ENCODE measurements at regions of chr17 and their contacts with region 1.

Region 1: DNA sequence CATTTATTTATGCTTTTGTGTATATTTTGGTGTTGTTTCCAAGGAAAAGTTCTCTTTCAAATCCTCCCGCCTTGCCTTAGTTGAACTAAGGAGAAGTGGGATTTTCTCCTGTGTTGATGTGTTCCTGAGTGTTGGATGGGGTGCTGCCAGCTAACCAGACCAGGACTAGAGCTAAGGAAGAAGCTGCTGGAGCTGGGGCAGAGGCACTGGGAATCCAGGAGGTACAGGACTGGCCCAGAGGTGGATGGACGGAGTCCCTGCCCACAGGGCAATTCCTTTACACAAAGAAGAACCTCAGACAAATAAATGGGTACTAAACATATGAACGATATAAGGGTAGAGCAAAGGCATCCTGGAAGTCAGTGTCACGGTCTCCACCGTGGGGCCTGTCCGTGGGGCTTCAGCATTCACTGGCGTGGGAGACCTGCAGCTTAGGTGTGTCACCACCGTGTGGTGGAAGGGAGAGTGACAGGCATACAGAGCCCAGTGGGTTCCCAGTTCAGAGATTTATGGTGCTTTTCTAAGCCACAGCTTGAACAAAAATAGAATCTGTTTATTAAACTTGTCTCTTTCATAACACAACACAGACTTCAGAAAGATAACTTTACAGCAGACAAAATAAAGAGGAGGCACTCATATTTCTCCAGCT is 270.7 kb downstream of the NTN1 start:
- DNase-seq: peak; percentile 67
- H3K4me3 ChIP-seq: no peak overlapping the region; a peak in 1 of 4 replicates
- H3K27ac ChIP-seq: no peak overlapping the region
- H3K4me1 ChIP-seq: no peaks in the 10 kb centered on the region
- H3K27me3 ChIP-seq: no peaks in the 10 kb centered on the region
- CTCF ChIP-seq: peak; percentile 53
- EP300 ChIP-seq: no peak
- RAD21 ChIP-seq: peak; percentile 68

Region 2: GRCh38 chr17:9273428-9274391 is 18.3 kb before region 1 on chr17:
- CTCF ChIA-PET with region 1: interaction called, 13 read pairs
- POLR2A ChIA-PET with region 1: no interaction called
- DNase-seq: no peak
- H3K4me3 ChIP-seq: no peak overlapping the region
- H3K27ac ChIP-seq: no peak overlapping the region
- H3K4me1 ChIP-seq: no peaks in the 10 kb centered on the region; a peak in 1 of 4 replicates
- H3K27me3 ChIP-seq: no peaks in the 10 kb centered on the region
- CTCF ChIP-seq: no peak
- EP300 ChIP-seq: no peak
- RAD21 ChIP-seq: no peak

Region 3: DNA sequence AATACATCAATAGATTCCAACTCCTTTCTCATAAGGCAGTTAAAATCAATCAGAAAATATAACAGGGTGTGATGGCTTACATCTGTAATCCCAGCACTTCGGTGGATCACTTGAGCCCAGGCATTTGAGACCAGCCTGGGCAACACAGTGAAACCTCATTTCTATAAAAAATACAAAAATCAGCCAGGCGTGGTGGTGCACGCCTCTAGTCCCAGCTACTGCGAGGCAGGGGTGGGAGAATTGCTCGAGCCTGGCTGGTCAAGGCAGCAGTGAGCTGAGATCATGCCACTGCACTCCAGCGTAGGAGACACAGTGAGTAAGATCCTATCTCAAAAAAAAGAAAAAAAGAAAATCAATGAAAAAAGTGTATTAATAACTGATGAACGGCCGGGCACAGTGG is 12.1 kb before region 1 on chr17:
- CTCF ChIA-PET with region 1: interaction called, 13 read pairs
- POLR2A ChIA-PET with region 1: no interaction called
- DNase-seq: no peak
- H3K4me3 ChIP-seq: no peak overlapping the region
- H3K27ac ChIP-seq: no peak overlapping the region
- H3K4me1 ChIP-seq: peaks cover 0 to 2% of the 10 kb centered on the region in 2 experiments; a peak in 2 of 4 replicates
- H3K27me3 ChIP-seq: no peaks in the 10 kb centered on the region
- CTCF ChIP-seq: no peak
- EP300 ChIP-seq: no peak
- RAD21 ChIP-seq: no peak

Region 4: DNA sequence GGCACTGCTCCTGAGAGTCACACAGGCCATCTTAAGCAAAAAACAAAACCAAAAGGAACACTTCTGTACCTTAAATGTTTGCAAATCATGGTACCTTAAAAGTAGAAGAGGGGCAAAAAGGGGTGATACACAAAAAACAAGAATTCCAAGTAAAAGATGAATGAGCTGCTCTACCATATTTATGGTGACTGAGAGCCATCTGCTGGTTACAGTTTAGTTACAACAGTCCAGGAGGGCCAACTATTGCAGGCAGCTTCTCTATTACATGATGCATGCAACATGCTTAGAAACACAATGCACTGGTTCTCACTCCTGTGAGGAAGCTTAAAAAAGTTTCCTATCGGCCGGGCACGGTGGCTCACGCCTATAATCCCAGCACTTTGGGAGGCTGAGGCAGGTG is 230.0 kb after region 1 on chr17:
- CTCF ChIA-PET with region 1: interaction called, 10 read pairs
- POLR2A ChIA-PET with region 1: no interaction called
- DNase-seq: peak; percentile 49
- H3K4me3 ChIP-seq: no peak overlapping the region; a peak in 1 of 4 replicates
- H3K27ac ChIP-seq: no peak overlapping the region
- H3K4me1 ChIP-seq: no peaks in the 10 kb centered on the region; a peak in 1 of 4 replicates
- H3K27me3 ChIP-seq: no peaks in the 10 kb centered on the region
- CTCF ChIP-seq: peak; percentile 66
- EP300 ChIP-seq: no peak
- RAD21 ChIP-seq: peak; percentile 81

Measured in SK-N-SH (cell line).